ENCODE measurements at regions of chr1 and their contacts with region 1.

Region 1: DNA sequence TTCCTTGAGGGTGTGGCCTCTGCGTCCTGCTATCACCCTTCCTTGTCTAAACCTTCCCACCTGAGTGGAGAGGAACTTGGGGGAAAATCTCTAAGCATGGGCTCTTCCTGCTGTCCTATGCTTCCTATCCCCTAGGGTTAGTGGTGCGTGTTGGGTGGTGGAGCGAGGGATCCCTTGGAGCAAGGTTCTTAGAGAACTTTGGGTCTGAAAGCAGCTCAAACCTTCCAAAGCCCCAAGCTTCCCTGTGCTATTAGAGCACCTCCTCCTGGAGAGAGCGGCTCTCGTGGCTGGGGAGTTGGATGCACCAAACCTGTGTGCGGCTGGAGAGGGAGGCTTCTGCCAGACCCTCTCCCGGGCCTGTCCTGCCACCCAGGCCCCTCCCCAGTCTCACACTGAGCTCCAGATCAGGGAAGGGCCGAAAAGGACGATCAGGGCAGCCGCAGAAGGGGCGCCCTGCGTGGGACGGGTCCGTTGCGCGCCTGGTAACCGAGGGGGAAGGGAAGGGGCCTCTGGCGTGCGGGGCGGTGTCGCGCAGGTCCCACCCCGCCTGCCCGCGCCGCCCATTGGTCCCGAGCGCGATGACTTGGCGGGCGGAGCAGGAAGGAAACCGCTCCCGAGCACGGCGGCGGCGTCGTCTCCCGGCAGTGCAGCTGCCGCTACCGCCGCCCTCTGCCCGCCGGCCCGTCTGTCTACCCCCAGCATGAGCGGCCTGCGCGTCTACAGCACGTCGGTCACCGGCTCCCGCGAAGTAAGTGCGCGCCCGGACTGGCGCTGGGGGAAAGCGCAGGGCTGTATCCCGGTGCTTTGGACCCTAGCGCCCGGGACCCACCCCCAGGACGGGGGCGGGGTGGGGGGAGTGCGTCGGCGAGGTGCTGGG is at the start of gene SH3BGRL3:
- DNase-seq: peak; percentile 71 to 96 (median 91)

Region 2: DNA sequence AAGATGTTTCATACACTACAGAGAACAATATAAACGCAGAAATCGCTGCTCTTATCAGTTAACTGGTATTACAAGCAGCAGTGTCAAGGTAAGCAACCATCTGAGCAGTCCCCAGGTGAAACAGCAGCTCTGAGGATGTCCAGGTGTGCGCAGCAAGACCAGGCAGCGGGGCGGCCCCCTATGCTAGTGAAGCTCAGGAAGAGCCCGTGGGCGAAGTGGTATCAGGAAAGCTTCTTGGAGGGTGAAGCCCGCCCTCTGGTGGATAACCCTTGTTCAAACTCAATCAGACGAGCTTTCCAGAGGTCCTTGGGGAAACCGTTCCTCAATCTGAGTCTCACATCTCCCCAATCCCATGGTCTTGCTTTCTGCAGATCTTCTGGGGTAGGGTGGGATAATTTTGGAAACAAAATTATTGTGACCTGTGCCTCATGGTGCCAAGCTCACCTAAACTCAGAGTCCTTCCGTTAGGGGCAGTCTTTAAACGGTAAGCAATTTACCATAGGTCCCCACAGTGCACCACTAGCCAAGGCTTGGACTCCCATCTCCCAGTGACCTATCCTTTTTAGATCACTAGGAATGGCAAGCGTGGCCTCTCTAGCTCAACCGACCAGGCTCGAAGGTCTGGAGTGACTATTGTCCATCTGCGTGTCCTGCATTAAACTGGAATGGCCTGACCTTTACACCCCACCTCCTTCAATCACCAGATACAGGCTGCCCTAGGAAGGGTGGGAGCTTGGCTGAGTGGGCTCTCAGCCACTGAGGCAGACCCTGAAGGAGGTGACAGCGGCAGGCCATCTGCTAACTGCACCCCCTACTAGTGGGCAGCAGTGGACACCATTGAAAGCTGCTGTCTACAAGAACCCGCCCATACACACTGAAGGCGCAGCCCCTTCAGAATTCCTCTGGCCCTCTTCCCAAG is 134.4 kb before region 1 on chr1:
- intact Hi-C with region 1: no loop called
- DNase-seq: peak; percentile 66 to 96 (median 87)

Region 3: DNA sequence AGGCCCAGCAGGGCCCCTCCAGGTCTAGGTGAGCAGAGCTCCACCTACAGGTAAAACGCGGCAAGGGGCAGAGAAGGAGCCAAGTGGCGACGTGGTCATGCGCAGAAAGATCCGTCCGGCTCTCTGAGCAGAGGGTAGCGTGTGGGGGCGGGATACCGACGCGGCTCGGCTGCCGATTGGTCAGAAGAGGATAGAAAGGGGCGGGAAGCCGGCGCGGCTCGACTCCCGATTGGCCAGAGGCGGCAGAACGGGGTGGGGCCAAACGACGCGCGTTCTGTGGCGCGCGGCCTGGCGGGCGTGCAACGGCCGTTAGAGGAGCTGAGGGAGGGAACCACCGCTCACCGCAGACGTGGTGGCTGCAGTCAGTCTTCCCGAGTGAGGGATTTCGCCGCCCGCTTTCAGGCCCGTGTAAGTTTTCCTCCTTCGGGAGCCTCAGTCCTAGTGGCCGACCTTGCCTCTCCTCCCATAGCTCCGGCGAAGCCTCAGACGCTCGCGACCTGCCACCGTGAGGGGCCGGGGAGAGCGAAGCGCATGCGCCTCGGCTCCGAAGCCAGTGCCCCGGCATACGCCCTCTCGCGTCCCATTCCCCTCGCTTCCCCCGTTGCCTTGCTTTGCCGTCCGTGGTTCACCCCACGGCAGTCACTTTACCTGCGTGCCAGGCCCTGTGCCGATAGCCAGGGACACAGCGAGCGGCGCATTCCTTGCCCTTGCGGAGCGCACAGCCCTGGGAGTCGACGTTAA is 45.6 kb before region 1 on chr1 and contains the start of gene CEP85:
- intact Hi-C with region 1: loop called (anchors 5 kb)
- DNase-seq: peak; percentile 97 to 100 (median 99)

Region 4: GRCh38 chr1:26321315-26322041 is 41.8 kb after region 1 on chr1:
- intact Hi-C with region 1: loop called (anchors 5 kb)
- DNase-seq: peak; percentile 88 to 98 (median 95)

Region 5: DNA sequence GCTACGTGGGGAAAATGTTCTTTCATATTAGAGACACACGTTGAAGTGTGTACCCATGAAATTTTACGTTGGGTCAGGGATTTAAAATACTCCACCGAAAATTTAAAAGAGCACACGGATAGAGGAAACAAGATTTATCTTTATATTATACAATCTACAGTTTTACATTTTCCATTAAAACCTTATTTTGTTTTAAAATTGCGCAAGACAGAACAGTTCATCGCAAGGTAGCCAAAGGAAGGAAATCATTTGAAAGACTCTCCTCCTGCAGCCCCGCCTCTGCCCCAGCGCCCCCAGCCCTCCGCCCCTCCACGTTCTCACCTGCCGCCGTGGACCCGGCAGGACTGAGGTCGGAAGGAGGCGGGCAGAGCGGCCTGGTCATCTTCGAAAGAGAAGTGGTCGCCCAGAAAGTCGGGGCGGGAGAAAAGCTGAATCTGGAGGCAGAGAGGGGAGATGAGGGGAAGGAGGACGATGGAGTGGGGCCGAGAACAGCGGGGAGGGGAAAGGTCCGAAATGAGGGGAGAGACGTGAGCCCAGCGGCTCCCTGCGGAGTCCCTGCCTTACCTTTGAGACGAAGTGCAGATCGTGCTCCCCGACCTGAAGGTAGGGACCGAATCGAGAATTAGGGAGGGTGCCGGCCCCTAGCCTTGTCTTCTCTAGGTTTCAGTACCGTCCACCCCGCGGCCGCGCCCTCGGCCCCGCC is 56.2 kb after region 1 on chr1:
- intact Hi-C with region 1: no loop called
- DNase-seq: peak in 1 of 42 donors; percentile 62

Measured in head of caudate nucleus (tissue), 42 donors.